A673 (cell line): ENCODE measurements at regions of chr2 and their contacts with region 1.

Region 1: GRCh38 chr2:7427293-7428060 is 510.3 kb downstream of the RNF144A start:
- DNase-seq: peak; percentile 85
- H3K4me3 ChIP-seq: no peak overlapping the region
- H3K27ac ChIP-seq: no peak overlapping the region
- H3K4me1 ChIP-seq: peaks cover 8% of the 10 kb centered on the region
- H3K27me3 ChIP-seq: no peaks in the 10 kb centered on the region
- CTCF ChIP-seq: peak; percentile 79

Region 2: DNA sequence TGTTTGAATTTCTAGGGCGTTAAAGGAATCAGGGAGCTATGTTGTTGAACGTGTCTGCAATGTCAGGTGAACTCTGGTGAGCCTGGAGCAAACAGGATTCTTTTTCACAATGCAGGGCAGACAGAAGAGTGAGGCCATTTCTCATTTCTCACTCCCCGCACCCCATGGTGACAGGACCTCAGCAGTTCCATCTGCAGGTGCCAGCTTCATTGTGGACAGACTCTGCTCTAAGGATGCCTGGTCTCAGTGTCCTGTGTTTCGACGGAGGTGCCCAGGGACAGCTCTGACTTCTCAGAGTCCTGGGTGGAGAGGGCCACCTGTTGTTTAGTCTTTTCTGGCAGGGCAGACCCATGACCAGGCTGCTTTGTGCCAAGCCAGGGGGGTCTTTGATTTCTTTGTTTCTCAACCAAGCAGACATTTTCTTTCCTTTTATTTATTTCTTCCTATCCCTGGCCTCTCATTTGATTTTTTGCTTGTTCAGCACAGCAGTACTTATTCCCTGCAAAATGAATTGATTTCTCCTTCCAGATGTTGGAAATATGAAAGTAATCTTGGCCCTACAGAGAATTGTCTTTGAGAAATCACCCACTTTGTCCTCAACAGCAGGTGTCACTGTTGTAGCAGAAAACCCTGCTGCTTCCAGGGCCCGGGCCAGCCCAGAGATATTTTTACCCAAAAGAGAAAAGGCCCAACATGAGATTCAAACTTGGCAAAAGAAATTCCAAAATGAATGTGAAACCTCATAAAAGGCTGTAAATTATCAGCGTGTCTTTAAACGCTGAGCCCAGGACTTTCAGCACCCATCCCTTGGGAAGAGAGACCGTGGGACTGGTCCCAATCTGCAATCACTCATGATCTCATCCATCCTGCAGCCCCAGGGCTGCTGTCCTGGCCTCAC is 308.6 kb before region 1 on chr2:
- CTCF ChIA-PET with region 1: no interaction called
- POLR2A ChIA-PET with region 1: no interaction called
- intact Hi-C with region 1: loop called (anchors 2 kb)
- DNase-seq: peak; percentile 83
- H3K4me3 ChIP-seq: no peak overlapping the region
- H3K27ac ChIP-seq: peak overlapping the region; percentile 72
- H3K4me1 ChIP-seq: peaks cover 19% of the 10 kb centered on the region
- H3K27me3 ChIP-seq: no peaks in the 10 kb centered on the region
- CTCF ChIP-seq: peak; percentile 84

Region 3: GRCh38 chr2:7203055-7203467 is 224.4 kb before region 1 on chr2:
- CTCF ChIA-PET with region 1: no interaction called
- POLR2A ChIA-PET with region 1: no interaction called
- intact Hi-C with region 1: loop called (anchors 2 kb)
- DNase-seq: peak; percentile 83
- H3K4me3 ChIP-seq: no peak overlapping the region
- H3K27ac ChIP-seq: peak overlapping the region; percentile 75
- H3K4me1 ChIP-seq: peaks cover 43% of the 10 kb centered on the region
- H3K27me3 ChIP-seq: no peaks in the 10 kb centered on the region
- CTCF ChIP-seq: peak; percentile 95

Region 4: DNA sequence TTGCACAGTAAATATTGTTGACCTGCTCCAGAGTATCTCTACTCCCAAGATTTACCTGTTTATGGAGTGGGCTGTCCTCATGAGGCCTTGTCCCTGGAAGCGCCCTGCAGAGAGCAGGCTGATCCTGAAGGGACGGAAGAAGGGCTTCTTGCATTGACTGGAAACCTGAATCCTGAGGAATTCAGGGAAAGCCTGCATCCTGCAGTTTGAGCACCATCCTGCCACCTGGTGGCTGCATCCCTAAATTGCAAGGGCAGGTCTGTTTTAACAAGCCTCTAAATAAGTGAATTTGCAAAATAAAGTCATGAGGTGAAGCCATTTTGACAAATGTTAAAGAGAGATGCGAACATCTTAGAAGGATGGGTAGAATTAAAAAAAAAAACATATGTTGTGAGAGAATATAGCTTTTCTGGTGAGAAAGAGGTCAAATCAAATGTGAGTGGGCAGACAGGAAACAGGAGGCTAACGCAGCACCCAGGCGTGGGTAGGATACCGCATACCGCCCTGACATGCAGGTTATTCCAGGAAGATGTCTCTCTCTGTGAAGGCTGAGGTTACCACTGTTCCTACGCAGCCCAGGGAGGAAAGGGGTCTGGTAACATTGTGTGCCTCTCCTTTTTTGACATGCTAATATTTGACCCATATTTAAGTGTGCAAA is 244.7 kb after region 1 on chr2:
- CTCF ChIA-PET with region 1: no interaction called
- POLR2A ChIA-PET with region 1: no interaction called
- intact Hi-C with region 1: loop called (anchors 10 kb)
- DNase-seq: peak; percentile 64
- H3K4me3 ChIP-seq: no peak overlapping the region
- H3K27ac ChIP-seq: no peak overlapping the region
- H3K4me1 ChIP-seq: no peaks in the 10 kb centered on the region
- H3K27me3 ChIP-seq: no peaks in the 10 kb centered on the region
- CTCF ChIP-seq: peak; percentile 84

Region 5: DNA sequence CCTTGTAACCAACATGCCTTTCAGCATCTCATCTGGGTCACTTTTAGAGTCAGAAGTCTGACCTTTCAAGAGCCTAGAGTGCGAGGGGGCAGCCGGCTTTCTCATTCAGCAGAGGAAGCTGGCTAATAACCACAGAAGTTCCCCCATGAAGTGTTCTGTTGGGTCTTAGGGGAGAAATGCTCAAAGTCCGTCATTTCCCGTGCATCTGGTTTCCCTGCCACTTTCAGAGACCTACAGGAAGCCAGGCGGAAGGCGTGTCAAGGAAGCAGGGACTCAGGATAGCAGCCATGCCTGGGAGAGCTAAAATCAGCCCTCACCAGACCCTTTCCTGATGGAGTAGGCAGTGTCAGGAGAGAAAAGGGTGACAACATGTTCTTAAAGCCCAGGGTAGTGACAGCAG is 952.5 kb after region 1 on chr2:
- CTCF ChIA-PET with region 1: no interaction called
- POLR2A ChIA-PET with region 1: no interaction called
- intact Hi-C with region 1: loop called (anchors 10 kb)
- DNase-seq: no peak
- H3K4me3 ChIP-seq: no peak overlapping the region
- H3K27ac ChIP-seq: peak overlapping the region; percentile 32
- H3K4me1 ChIP-seq: peaks cover 23% of the 10 kb centered on the region
- H3K27me3 ChIP-seq: no peaks in the 10 kb centered on the region
- CTCF ChIP-seq: no peak

Region 6: GRCh38 chr2:8761529-8762164 is 1334.2 kb after region 1 on chr2:
- CTCF ChIA-PET with region 1: interaction called, 4 read pairs
- POLR2A ChIA-PET with region 1: interaction called, 4 read pairs
- intact Hi-C with region 1: loop called (anchors 5 kb)
- DNase-seq: peak; percentile 76
- H3K4me3 ChIP-seq: no peak overlapping the region
- H3K27ac ChIP-seq: no peak overlapping the region
- H3K4me1 ChIP-seq: peaks cover 13% of the 10 kb centered on the region
- H3K27me3 ChIP-seq: no peaks in the 10 kb centered on the region
- CTCF ChIP-seq: peak; percentile 79